RWPE1 (cell line): ENCODE measurements at regions of chr4 and their contacts with region 1.

Region 1: DNA sequence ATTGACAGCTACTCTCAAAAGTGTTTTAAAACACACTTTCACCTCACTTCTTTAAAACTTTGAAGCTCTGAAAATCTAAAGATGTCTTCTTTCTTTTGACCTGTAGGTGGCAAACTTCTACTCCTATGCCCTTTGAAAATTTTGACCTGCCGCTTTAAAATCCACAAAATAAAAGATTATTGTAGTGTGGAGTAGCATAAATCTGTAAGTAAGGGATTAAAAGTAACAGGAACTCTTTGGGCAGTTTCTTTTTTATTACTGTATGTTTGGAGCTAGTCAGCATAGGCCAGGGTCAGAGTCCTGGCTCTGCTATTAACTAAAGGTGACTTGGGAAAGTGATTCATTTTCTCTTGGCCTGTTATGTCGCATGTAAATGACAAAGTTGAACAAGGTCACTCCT is 25.5 kb downstream of the BBS12 start:
- DNase-seq: peak; percentile 25
- H3K27ac ChIP-seq: no peak overlapping the region
- CTCF ChIP-seq: peak; percentile 76

Region 2: DNA sequence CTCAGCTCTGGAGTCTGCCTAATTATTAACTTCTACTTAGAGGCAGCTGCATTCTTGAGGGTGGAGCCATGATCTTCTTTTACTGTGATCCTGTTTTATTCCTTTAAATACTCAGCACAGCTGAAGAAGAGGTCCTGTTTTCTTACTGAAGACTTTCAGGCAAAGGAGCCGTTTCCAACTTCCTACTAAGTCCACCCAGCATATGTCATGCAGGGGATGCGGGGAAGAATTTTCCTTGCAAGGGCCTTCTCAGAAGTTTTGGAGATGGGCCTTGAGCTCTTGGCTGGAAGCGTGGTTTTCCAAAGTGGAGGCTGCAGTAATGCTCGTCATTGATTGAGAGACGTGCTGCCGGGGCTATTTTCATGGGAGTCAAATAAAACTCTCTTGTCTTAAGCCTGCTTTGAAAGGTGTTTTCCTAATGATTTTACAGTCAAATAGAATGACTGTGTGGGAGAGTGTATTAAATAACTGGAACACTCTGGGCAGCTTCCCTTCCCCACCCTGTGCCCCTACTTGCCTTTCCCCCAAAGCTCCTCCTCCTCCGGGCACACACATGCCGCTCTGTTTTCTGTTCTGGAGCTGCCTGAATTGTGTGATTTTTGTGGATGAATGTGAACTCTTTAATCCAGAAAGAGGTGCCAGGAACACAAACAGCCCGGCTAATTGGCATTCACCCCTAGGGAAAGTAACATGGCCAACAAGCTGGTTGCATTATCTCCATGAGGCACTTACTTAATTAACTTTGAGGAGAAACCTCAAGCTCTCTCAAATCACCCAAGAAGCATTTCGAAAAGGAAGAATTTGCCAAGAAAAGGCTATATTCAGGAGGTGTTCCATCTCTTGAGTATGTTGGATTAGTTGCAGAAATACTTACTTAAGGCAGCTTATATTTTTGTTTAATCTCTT is 96.7 kb after region 1 on chr4:
- CTCF ChIA-PET with region 1: no interaction called
- POLR2A ChIA-PET with region 1: no interaction called
- DNase-seq: no peak
- H3K27ac ChIP-seq: peak overlapping the region; percentile 59
- CTCF ChIP-seq: no peak

Region 3: DNA sequence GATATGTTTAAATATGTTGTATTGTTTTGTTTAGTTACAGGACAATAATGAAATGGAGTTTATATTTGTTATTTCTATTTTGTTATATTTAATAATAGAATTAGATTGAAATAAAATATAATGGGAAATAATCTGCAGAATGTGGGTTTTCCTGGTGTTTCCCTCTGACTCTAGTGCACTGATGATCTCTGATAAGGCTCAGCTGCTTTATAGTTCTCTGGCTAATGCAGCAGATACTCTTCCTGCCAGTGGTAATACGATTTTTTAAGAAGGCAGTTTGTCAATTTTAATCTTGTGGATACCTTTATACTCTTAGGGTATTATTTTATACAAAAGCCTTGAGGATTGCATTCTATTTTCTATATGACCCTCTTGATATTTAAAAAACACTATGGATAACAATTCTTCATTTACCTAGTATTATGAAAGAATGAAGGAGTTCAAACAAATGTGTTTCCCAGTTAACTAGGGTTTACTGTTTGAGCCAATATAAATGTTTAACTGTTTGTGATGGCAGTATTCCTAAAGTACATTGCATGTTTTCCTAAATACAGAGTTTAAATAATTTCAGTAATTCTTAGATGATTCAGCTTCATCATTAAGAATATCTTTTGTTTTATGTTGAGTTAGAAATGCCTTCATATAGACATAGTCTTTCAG is 137.4 kb after region 1 on chr4:
- CTCF ChIA-PET with region 1: interaction called, 11 read pairs
- POLR2A ChIA-PET with region 1: no interaction called
- DNase-seq: no peak
- H3K27ac ChIP-seq: no peak overlapping the region
- CTCF ChIP-seq: no peak

Region 4: GRCh38 chr4:122914292-122914904 is 156.4 kb after region 1 on chr4:
- CTCF ChIA-PET with region 1: interaction called, 20 read pairs
- POLR2A ChIA-PET with region 1: no interaction called
- DNase-seq: no peak
- H3K27ac ChIP-seq: no peak overlapping the region
- CTCF ChIP-seq: peak; percentile 49

Region 5: DNA sequence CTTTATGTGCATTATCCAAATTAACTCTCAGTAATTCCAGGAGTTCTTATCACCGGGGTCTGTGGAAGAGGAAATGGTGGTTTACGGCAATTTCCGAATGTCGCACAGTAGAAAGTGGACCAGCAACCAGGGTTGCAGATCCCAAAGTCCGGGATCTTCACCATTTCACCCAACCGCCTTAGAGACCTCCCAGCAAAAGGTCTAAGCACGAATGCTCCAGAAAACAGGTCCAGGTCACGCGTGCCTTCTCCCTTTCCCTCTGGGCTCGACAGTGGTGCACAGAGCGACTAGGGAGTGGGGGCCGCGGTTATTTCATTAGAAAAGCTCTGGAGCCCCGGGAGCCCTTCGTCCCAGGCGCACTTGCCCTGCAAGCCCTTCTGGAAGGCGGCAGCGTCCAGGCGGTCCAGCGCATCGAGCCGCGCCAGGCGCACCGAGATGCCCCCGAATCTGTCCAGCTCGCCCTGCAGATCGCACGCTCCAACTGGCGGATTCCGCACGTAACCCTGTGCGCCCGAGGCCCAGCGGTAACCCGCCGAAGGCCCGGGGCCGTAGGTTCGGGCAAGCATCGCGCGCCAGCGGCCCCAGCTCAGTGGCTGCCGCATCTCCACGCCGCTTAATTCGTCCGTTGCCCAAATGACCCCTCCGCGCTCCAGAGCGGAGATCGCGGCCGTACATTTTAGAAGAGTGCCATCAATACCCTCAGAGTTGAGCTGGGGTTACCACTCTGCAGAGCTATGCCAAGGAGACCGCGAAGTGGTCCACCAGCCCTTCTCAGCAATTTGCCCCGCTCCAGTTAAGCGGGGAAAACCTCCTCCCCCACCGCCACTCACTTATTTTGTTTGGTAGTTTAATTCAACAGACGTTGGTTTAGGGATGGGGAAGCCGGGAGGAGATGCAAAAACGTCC is 164.2 kb after region 1 on chr4 and contains the start of gene NUDT6:
- CTCF ChIA-PET with region 1: interaction called, 11 read pairs
- POLR2A ChIA-PET with region 1: no interaction called
- DNase-seq: peak; percentile 57
- H3K27ac ChIP-seq: peak within 1 kb of the TSS; percentile 90
- CTCF ChIP-seq: no peak

Region 6: GRCh38 chr4:123304151-123304964 is 546.3 kb after region 1 on chr4:
- CTCF ChIA-PET with region 1: no interaction called
- POLR2A ChIA-PET with region 1: no interaction called
- DNase-seq: no peak
- H3K27ac ChIP-seq: no peak overlapping the region
- CTCF ChIP-seq: no peak